H1 (cell line): ENCODE measurements at regions of chr16 and their contacts with region 1.

Region 1: GRCh38 chr16:2178321-2179106 is 17.9 kb downstream of the CASKIN1 start:
- DNase-seq: peak; percentile 62 to 95
- H3K4me3 ChIP-seq: peak overlapping the region in 1 of 4 experiments; percentile 43; a peak in 3 of 8 replicates
- H3K27ac ChIP-seq: no peak overlapping the region
- H3K4me1 ChIP-seq: peaks cover 0 to 7% (median 2%) of the 10 kb centered on the region in 4 experiments; a peak in 4 of 7 replicates
- H3K27me3 ChIP-seq: no peaks in the 10 kb centered on the region; a peak in 1 of 7 replicates
- CTCF ChIP-seq: no peak
- EP300 ChIP-seq: no peak
- POLR2A ChIP-seq: peak in 1 of 2 experiments; percentile 58; a peak in 1 of 3 replicates
- RAD21 ChIP-seq: no peak

Region 2: DNA sequence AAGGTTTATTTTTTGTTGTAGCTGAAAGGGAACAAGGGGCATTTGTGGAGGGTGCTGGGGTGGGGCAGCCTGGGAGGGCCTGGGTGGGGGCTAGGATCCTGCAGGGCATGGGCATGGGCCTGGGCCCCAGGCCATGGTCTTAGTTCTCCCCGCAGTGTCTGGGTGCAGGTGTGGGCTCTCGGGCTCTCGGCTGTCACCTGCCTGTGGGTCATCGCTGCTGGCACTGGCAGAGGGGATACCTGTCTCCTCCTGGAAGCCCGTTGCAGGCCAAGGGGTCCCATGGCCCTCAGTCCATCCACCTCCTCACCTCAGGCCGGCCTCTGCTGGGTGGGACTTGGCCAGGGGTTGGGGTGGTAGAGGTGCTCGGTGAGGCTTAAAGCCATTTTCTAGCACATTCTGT is 100.4 kb before region 1 on chr16:
- CTCF ChIA-PET with region 1: no interaction called
- POLR2A ChIA-PET with region 1: no interaction called
- DNase-seq: no peak
- H3K4me3 ChIP-seq: no peak overlapping the region
- H3K27ac ChIP-seq: no peak overlapping the region
- H3K4me1 ChIP-seq: no peaks in the 10 kb centered on the region
- H3K27me3 ChIP-seq: no peaks in the 10 kb centered on the region
- CTCF ChIP-seq: no peak
- EP300 ChIP-seq: no peak
- POLR2A ChIP-seq: no peak
- RAD21 ChIP-seq: no peak

Region 3: GRCh38 chr16:2205104-2205966 is 26.8 kb after region 1 on chr16 and contains the start of gene MLST8:
- CTCF ChIA-PET with region 1: no interaction called
- POLR2A ChIA-PET with region 1: interaction called, 11 read pairs
- DNase-seq: peak in 1 of 2 experiments; percentile 91
- H3K4me3 ChIP-seq: peak within 1 kb of the TSS; percentile 78 to 97 (median 92)
- H3K27ac ChIP-seq: peak within 1 kb of the TSS; percentile 98
- H3K4me1 ChIP-seq: peaks cover 0 to 13% (median 8%) of the 10 kb centered on the region in 4 experiments; a peak in 6 of 7 replicates
- H3K27me3 ChIP-seq: no peaks in the 10 kb centered on the region; a peak in 3 of 7 replicates
- CTCF ChIP-seq: no peak
- EP300 ChIP-seq: peak in 1 of 2 experiments; percentile 97; a peak in 2 of 3 replicates
- POLR2A ChIP-seq: peak in 1 of 2 experiments; percentile 94; a peak in 2 of 3 replicates
- RAD21 ChIP-seq: no peak
- total RNA-seq, gene MLST8: 67.6 and 69.6 TPM in 2 replicates